ENCODE measurements at regions of chr21 and their contacts with region 1.

Region 1: DNA sequence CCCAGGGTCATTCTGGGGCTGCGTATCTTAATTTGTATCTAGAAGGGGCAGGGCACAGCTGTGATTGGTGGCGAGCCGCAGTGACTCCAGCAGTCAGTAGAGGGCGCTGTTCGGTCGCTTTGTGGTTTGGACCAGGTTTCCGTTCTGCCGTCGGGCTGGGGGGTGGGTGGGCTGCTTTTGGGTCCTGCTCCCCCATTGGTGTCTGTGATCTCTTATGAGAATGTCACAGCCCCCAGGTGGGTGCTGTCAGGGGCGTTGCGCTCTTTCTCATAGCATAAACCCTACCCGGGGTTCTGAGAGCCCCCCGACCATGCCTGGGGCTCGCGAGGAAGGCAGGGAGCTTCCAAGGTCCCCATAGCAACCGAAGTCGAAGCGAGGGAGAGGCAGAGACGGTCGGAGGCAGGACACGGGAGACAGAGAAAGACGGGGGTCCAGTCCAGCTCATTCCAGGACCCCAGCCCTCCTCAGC is 5.4 kb downstream of the TFF3 start:
- DNase-seq: no peak
- H3K4me3 ChIP-seq: peak overlapping the region in 1 of 3 donors; percentile 39
- H3K27ac ChIP-seq: no peak overlapping the region
- H3K4me1 ChIP-seq: no peaks in the 10 kb centered on the region
- H3K27me3 ChIP-seq: peaks cover 0 to 8% of the 10 kb centered on the region in 2 donors
- CTCF ChIP-seq: peak in 2 of 3 donors; percentile 39 to 72
- POLR2A ChIP-seq: no peak

Region 2: DNA sequence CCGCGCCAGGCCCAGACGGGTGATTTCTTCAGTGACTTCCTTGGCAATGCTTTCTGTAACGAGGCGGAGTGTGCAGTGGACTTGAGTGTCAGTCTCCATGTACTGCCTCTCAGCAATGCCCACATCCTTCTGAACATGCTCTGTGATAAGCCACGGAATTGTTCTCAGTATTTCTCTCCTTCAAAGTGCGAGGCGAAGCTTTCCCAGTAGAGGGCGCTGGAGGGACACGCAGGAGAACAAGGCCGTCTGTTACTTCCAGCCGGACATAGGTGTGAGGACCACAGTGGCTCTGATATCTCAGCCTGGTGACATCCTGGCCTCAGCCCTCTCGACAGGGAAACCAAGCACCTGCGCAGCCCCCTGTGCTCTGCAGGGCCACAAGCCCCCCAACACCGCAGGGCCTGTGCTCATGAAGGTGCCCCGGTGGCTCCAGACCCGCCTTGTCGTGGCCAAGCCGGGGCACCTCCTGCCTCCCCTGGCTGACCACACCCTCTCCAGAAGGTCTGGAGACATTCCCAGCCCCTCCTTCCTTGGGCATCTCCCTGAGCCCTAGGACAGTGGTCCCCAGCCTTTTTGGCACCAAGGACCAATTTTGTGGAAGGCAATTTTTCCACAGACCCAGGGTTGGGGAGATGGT is 1187.9 kb before region 1 on chr21:
- intact Hi-C with region 1: loop called (anchors 10 kb)
- DNase-seq: peak; percentile 89 to 90
- H3K4me3 ChIP-seq: no peak overlapping the region
- H3K27ac ChIP-seq: no peak overlapping the region
- H3K4me1 ChIP-seq: no peaks in the 10 kb centered on the region
- H3K27me3 ChIP-seq: no peaks in the 10 kb centered on the region
- CTCF ChIP-seq: peak; percentile 63 to 89 (median 89)
- POLR2A ChIP-seq: no peak

Measured in breast epithelium (tissue), 4 donors.